ENCODE measurements at regions of chr1 and their contacts with region 1.

Region 1: DNA sequence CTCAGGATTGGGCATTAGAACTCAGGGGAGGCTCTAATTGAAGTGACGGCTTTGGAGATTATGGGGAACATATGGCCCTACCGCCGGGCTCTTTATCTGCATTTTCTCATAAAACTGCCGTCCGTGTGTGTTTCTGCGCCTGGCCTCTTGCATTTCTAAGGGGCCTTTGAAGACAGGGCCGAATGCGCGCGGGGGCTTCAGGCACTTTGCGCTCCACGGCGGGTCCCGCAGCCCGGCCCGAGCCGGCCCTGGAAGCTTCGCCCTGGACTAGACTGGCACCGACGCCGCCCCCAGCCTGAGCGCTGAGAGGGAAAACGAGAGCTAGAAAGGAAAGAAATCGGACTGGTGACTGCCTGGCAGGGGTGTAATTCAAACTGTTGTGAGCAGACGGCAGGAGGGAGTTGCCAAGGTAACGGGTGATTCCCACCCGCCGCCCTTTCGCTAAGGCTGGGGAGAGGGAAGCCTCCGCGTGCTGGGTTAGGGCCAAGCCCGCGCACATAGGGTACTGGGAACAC is 120.7 kb downstream of the LMX1A start:
- DNase-seq: no peak
- H3K4me3 Mint-ChIP-seq: no peak overlapping the region
- H3K27ac Mint-ChIP-seq: no peak overlapping the region
- H3K4me1 Mint-ChIP-seq: peaks cover 5% of the 10 kb centered on the region
- H3K27me3 Mint-ChIP-seq: peaks cover 51% of the 10 kb centered on the region

Region 2: DNA sequence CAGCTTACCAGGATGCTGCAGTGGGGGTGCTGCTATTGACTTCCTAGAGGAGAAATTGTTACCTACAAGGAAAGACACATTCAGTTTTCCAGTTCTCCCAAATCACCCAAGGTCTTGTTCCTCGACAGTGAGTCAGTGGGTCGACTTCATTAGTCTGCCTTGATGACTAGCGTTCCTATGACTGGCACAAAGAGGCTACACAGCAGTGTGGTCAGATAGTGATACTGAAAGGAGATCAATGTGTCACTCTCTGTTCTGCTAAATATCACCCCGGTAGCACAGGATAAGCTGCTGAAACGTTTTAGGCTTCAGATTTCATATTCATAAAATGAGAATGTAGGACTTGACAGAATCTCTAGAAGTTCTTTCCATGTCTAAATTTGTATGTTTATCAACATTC is 236.7 kb before region 1 on chr1:
- CTCF ChIA-PET with region 1: no interaction called
- POLR2A ChIA-PET with region 1: no interaction called
- intact Hi-C with region 1: no loop called
- DNase-seq: no peak
- H3K4me3 Mint-ChIP-seq: no peak overlapping the region
- H3K27ac Mint-ChIP-seq: no peak overlapping the region
- H3K4me1 Mint-ChIP-seq: no peaks in the 10 kb centered on the region
- H3K27me3 Mint-ChIP-seq: no peaks in the 10 kb centered on the region

Region 3: DNA sequence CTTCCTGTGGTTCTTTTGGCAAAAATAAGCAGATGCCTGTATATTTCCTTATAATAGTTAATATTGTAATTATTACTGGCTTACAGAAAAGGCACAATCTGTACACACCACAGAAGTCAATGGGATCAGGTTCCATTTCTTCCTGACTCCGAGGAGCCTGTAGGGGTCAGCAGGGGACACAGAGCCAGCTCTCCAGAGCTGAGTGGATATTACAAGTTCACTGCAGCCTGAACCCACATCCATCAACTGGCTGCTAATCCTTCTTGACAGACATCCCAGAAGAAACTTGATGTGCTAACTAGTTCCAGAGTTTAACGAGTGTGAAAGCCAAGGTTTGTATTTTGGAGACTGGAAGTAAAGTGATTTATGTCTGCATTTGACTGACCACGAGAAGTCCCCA is 83.1 kb before region 1 on chr1:
- CTCF ChIA-PET with region 1: no interaction called
- POLR2A ChIA-PET with region 1: no interaction called
- intact Hi-C with region 1: no loop called
- DNase-seq: no peak
- H3K4me3 Mint-ChIP-seq: no peak overlapping the region
- H3K27ac Mint-ChIP-seq: no peak overlapping the region
- H3K4me1 Mint-ChIP-seq: no peaks in the 10 kb centered on the region
- H3K27me3 Mint-ChIP-seq: no peaks in the 10 kb centered on the region

Region 4: DNA sequence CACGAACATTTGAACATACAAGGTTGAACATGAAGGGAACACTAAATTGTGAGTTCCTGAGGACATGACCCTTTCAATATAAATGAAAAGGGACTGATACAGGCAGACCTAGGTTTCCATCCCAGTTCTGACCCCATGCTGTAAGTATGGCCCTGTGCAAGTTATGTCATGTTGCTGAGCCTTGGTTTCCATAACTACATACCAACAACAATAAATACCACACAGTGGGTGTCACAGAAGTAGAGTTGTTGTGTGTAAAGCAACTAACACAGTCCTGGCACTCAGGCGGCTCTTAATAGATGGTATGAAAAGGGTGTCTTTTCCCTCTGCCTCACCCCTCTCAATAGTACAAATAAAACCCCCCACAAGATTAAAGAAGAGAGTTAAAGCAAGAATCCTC is 20.2 kb before region 1 on chr1:
- CTCF ChIA-PET with region 1: no interaction called
- POLR2A ChIA-PET with region 1: no interaction called
- intact Hi-C with region 1: no loop called
- DNase-seq: no peak
- H3K4me3 Mint-ChIP-seq: no peak overlapping the region
- H3K27ac Mint-ChIP-seq: no peak overlapping the region
- H3K4me1 Mint-ChIP-seq: no peaks in the 10 kb centered on the region
- H3K27me3 Mint-ChIP-seq: peaks cover 6% of the 10 kb centered on the region

Region 5: DNA sequence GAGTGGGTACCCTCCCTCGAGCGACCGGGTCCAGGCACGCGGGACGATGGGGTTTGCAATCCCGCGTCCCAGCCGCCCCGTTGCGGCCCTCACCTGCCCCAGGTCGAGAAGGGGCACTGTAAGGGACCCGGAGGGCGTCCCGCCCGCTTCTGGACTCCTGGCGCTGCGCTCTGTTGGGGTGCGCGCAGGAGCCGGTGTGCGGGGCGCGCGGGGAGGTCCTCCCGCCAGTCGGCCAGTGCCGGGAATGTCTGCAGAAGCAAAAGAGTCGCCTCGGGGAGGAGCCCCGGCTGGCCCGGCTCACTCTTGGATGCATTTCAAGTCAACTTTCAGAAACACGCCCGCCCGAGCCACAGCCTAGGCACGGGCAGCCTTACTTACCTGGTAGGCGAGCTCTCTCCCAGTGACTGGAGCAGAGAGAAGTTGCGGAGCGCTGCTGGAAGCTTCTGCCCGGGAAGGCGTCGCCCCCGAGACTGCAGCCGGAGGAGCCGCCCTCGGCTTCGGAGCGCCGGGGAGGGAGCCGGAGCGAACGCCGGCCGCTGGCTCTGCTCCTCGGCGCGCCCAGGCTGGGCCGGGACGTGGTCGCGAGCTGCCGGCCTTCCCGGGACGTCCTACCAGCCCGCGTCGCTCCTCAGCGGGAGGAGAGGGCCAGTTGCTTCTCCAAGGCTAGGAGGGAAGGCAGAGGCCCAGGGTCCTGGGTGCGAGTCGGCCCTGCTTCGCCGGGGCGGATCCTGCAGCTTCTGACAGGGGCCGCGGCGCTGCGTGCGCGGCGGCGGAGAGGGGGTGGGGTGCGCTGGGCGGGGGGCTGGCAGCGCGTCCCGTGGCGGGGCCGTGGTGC is 120.4 kb after region 1 on chr1 and contains the start of gene LMX1A:
- CTCF ChIA-PET with region 1: no interaction called
- POLR2A ChIA-PET with region 1: no interaction called
- intact Hi-C with region 1: loop called (anchors 10 kb)
- DNase-seq: no peak
- H3K4me3 Mint-ChIP-seq: no peak within 1 kb of the TSS
- H3K27ac Mint-ChIP-seq: no peak within 1 kb of the TSS
- H3K4me1 Mint-ChIP-seq: peaks cover 10% of the 10 kb centered on the region
- H3K27me3 Mint-ChIP-seq: peaks cover 61% of the 10 kb centered on the region
- total RNA-seq, gene LMX1A: not detected

Region 6: DNA sequence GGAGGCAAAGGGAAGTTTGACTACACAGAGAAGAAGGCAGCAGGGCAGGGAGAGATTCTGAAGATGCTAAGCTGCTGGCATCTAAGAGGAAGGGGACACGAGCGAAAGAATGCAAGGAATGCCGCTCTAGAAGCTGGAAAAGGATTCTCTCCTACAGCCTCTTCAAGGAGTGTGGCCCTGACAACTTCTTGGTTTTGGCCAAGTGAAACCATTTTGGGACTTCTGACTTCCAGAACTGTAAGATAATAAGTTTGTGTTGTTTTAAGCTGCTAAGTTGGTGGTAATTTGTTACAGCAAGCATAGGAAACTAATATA is 423.7 kb after region 1 on chr1:
- CTCF ChIA-PET with region 1: no interaction called
- POLR2A ChIA-PET with region 1: no interaction called
- intact Hi-C with region 1: no loop called
- DNase-seq: no peak
- H3K4me3 Mint-ChIP-seq: no peak overlapping the region
- H3K27ac Mint-ChIP-seq: no peak overlapping the region
- H3K4me1 Mint-ChIP-seq: no peaks in the 10 kb centered on the region
- H3K27me3 Mint-ChIP-seq: no peaks in the 10 kb centered on the region

Measured in activated CD4-positive, alpha-beta memory T cell treated with anti-CD3 and anti-CD28 coated beads for 36 hours (primary cell).